Calu3 (cell line): ENCODE measurements at regions of chr15 and their contacts with region 1.

Region 1: DNA sequence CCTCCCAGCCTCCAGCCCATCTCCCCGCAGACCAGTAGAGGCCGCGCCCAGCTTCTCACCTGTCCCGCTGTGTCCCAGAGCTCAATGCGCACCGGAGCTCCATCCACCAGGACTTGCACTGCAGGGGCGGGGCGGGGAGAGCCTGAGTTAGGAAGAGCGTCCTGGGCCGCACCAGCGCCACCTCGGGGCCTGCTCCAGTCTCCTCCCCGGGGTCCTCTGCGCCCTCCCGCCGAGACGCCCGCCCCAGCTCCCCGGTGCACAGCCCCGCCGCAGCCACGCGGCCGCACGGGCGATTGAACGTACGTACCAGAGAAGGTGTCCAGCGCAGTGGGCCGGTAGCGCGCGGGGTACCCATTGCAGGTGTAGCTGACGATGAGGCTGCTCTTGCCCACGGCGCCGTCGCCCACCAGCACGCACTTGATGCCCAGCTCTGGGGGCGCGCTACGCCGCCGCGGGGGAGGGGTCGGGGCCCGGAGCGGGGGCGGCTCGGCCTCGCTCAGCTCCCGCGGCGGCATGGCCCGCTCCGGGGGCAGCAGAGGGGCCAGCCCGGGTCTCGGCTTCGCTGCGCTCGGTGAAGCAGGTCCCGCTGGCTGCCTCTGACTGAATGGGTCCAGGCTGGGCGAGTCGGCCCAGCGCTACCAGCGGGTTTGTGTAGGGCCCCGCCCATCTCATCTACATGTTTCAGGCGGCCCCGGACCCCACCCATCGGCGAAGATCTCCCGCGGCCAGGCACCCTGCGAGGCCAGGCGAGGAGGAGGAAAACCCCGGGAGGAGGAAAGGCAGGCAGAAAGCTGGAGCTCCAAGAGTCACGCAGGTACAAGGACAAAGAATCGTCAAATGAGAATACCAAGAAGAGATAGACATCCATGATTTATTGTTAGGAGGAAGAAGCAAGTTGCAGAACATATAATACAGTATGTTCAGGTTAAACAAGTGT is at the start of gene RHOV:
- DNase-seq: peak; percentile 87
- H3K4me3 Mint-ChIP-seq: peak within 1 kb of the TSS; percentile 71
- H3K27ac Mint-ChIP-seq: no peak within 1 kb of the TSS
- H3K4me1 Mint-ChIP-seq: peaks cover 34% of the 10 kb centered on the region
- H3K27me3 Mint-ChIP-seq: no peaks in the 10 kb centered on the region
- CTCF ChIP-seq: no peak
- total RNA-seq, gene RHOV: 4.2 and 4.9 TPM in 2 replicates

Region 2: DNA sequence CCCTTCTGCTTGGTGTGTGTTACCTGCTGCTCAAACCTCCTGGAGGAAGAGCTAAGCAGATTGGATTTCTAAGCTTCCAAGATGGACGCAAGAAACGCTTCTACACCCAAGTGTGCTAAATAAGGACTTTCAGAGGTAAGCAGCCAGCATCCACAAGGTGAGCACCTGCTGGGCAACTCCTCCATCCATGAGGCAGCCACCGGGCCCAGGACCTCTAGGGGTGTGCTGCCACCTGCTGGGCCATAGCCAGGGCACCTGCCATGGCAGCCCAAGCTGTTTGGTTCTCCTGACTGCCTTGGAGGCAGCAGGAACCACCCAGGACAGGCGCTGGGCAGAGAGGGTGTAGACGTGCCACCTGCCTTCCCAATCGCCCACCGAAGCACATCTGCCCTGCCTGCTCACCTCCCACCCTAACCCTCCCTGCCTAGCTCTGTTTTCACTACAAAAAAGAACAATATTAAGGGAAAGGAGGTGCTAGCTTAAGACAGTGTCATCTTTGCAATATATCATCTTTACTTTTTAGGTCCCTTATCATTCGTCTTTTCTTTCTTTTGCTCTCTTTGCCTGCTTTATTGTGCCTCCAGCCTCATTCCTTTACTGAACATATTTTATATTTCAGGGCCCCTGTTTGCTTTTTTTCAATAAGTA is 91.2 kb before region 1 on chr15:
- CTCF ChIA-PET with region 1: no interaction called
- intact Hi-C with region 1: no loop called
- DNase-seq: peak; percentile 85
- H3K4me3 Mint-ChIP-seq: no peak overlapping the region
- H3K27ac Mint-ChIP-seq: peak overlapping the region; percentile 33
- H3K4me1 Mint-ChIP-seq: no peaks in the 10 kb centered on the region
- H3K27me3 Mint-ChIP-seq: no peaks in the 10 kb centered on the region
- CTCF ChIP-seq: peak; percentile 46

Region 3: DNA sequence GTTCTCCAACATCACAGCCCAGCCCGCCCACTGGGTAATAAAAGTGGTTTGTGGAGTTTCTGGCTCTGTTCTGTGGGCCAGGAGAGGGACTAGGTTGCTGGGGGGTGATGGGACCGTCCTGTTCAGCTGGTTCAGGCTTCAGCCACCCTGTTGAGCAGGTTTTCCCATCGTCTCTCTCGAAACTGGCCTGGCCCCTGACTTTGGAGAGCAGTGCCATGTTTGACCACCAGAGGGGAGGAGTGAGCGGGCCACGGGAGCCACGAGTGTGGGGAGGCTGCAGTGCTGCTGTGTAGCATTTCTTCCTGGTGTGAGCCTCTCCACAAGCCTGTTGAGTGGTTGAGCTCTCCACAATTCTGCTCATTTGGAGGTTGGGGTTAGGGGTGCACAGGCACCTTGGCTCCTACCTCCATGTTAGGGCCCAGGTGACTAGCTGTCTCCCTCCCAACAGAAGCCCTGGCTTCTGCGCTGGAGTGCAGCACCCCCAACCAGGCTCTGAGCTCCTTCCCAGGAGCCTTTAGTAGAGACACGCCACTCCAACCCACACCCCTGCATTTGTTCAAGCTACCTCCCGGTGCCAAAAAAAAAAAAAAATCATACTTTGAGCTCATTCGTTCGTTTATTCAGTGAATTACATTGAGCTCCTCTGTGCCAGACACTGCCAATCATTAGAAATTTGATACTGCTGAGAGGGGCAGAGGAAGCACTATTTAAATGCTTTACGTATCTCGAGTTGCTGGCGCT is 16.1 kb before region 1 on chr15:
- CTCF ChIA-PET with region 1: interaction called, 73 read pairs
- intact Hi-C with region 1: no loop called
- DNase-seq: peak; percentile 90
- H3K4me3 Mint-ChIP-seq: no peak overlapping the region
- H3K27ac Mint-ChIP-seq: peak overlapping the region; percentile 44
- H3K4me1 Mint-ChIP-seq: peaks cover 12% of the 10 kb centered on the region
- H3K27me3 Mint-ChIP-seq: no peaks in the 10 kb centered on the region
- CTCF ChIP-seq: peak; percentile 63

Region 4: DNA sequence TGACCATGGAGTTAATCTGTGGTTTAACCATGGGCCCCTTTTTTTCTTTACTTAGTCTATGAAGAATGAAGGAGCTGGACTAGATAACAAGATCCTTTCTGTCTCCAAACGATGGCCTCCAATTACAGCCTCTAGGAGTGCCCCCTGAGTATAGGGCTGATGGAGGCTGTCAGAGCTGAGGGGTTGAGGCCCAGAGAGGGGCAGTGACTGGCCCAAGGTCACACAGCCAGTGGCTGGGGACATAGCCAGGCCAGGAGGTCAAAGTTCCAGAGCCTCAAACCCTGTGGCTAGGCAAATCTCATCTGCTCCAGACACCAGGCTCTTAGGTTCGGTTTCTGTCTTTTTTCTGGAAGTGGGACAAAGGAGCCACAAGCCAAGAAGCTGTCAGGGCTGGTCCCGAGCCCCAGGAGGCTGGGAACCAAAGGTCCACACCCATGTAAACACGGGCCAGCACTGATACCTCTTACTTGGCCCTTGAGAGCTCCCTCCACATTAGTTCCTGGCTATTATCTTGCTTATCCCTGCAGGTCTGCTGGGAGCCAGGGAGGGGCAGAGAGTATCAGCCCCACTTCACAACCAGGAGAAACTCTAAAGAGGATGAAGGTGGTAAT is 10.1 kb before region 1 on chr15:
- CTCF ChIA-PET with region 1: interaction called, 73 read pairs
- intact Hi-C with region 1: no loop called
- DNase-seq: no peak
- H3K4me3 Mint-ChIP-seq: no peak overlapping the region
- H3K27ac Mint-ChIP-seq: no peak overlapping the region
- H3K4me1 Mint-ChIP-seq: peaks cover 26% of the 10 kb centered on the region
- H3K27me3 Mint-ChIP-seq: no peaks in the 10 kb centered on the region
- CTCF ChIP-seq: no peak

Region 5: GRCh38 chr15:40928821-40929659 is 55.1 kb after region 1 on chr15 and contains the start of gene DLL4:
- CTCF ChIA-PET with region 1: no interaction called
- intact Hi-C with region 1: no loop called
- DNase-seq: peak; percentile 36
- H3K4me3 Mint-ChIP-seq: peak within 1 kb of the TSS; percentile 66
- H3K27ac Mint-ChIP-seq: no peak within 1 kb of the TSS
- H3K4me1 Mint-ChIP-seq: peaks cover 27% of the 10 kb centered on the region
- H3K27me3 Mint-ChIP-seq: peaks cover 47% of the 10 kb centered on the region
- CTCF ChIP-seq: no peak
- total RNA-seq, gene DLL4: not detected in 2 replicates

Region 6: GRCh38 chr15:40999190-40999589 is 125.3 kb after region 1 on chr15:
- CTCF ChIA-PET with region 1: no interaction called
- intact Hi-C with region 1: no loop called
- DNase-seq: no peak
- H3K4me3 Mint-ChIP-seq: no peak overlapping the region
- H3K27ac Mint-ChIP-seq: no peak overlapping the region
- H3K4me1 Mint-ChIP-seq: no peaks in the 10 kb centered on the region
- H3K27me3 Mint-ChIP-seq: no peaks in the 10 kb centered on the region
- CTCF ChIP-seq: no peak